MCF 10A (cell line): ENCODE measurements at regions of chr9 and their contacts with region 1.

Region 1: GRCh38 chr9:70602321-70603019 is 188.0 kb upstream of the KLF9 start:
- DNase-seq: peak; percentile 83
- H3K4me3 Mint-ChIP-seq: no peak overlapping the region
- H3K27ac Mint-ChIP-seq: no peak overlapping the region
- H3K4me1 Mint-ChIP-seq: peaks cover 12% of the 10 kb centered on the region
- H3K27me3 Mint-ChIP-seq: no peaks in the 10 kb centered on the region
- CTCF ChIP-seq: peak; percentile 77

Region 2: GRCh38 chr9:69421908-69422801 is 1180.3 kb before region 1 on chr9:
- CTCF ChIA-PET with region 1: interaction called, 3 read pairs
- POLR2A ChIA-PET with region 1: no interaction called
- intact Hi-C with region 1: loop called (anchors 10 kb)
- DNase-seq: peak; percentile 71
- H3K4me3 Mint-ChIP-seq: no peak overlapping the region
- H3K27ac Mint-ChIP-seq: no peak overlapping the region
- H3K4me1 Mint-ChIP-seq: no peaks in the 10 kb centered on the region
- H3K27me3 Mint-ChIP-seq: peaks cover 26% of the 10 kb centered on the region
- CTCF ChIP-seq: peak; percentile 78

Region 3: GRCh38 chr9:69971643-69972449 is 630.6 kb before region 1 on chr9:
- CTCF ChIA-PET with region 1: interaction called, 5 read pairs
- POLR2A ChIA-PET with region 1: interaction called, 5 read pairs
- intact Hi-C with region 1: loop called (anchors 1 kb)
- DNase-seq: peak; percentile 73
- H3K4me3 Mint-ChIP-seq: no peak overlapping the region
- H3K27ac Mint-ChIP-seq: peak overlapping the region; percentile 91
- H3K4me1 Mint-ChIP-seq: peaks cover 25% of the 10 kb centered on the region
- H3K27me3 Mint-ChIP-seq: no peaks in the 10 kb centered on the region
- CTCF ChIP-seq: peak; percentile 94

Region 4: GRCh38 chr9:70258692-70259511 is 343.6 kb before region 1 on chr9 and contains the start of gene SMC5:
- CTCF ChIA-PET with region 1: interaction called, 5 read pairs
- POLR2A ChIA-PET with region 1: interaction called, 9 read pairs
- intact Hi-C with region 1: loop called (anchors 10 kb)
- DNase-seq: peak; percentile 90
- H3K4me3 Mint-ChIP-seq: peak within 1 kb of the TSS; percentile 97
- H3K27ac Mint-ChIP-seq: peak within 1 kb of the TSS; percentile 99
- H3K4me1 Mint-ChIP-seq: peaks cover 63% of the 10 kb centered on the region
- H3K27me3 Mint-ChIP-seq: no peaks in the 10 kb centered on the region
- CTCF ChIP-seq: no peak
- total RNA-seq, gene SMC5: 29.8 and 31.9 TPM in 2 replicates

Region 5: GRCh38 chr9:70352802-70353201 is 249.7 kb before region 1 on chr9:
- CTCF ChIA-PET with region 1: interaction called, 31 read pairs
- POLR2A ChIA-PET with region 1: interaction called, 8 read pairs
- intact Hi-C with region 1: loop called (anchors 1 kb)
- DNase-seq: peak; percentile 14
- H3K4me3 Mint-ChIP-seq: no peak overlapping the region
- H3K27ac Mint-ChIP-seq: no peak overlapping the region
- H3K4me1 Mint-ChIP-seq: peaks cover 7% of the 10 kb centered on the region
- H3K27me3 Mint-ChIP-seq: no peaks in the 10 kb centered on the region
- CTCF ChIP-seq: peak; percentile 26

Region 6: DNA sequence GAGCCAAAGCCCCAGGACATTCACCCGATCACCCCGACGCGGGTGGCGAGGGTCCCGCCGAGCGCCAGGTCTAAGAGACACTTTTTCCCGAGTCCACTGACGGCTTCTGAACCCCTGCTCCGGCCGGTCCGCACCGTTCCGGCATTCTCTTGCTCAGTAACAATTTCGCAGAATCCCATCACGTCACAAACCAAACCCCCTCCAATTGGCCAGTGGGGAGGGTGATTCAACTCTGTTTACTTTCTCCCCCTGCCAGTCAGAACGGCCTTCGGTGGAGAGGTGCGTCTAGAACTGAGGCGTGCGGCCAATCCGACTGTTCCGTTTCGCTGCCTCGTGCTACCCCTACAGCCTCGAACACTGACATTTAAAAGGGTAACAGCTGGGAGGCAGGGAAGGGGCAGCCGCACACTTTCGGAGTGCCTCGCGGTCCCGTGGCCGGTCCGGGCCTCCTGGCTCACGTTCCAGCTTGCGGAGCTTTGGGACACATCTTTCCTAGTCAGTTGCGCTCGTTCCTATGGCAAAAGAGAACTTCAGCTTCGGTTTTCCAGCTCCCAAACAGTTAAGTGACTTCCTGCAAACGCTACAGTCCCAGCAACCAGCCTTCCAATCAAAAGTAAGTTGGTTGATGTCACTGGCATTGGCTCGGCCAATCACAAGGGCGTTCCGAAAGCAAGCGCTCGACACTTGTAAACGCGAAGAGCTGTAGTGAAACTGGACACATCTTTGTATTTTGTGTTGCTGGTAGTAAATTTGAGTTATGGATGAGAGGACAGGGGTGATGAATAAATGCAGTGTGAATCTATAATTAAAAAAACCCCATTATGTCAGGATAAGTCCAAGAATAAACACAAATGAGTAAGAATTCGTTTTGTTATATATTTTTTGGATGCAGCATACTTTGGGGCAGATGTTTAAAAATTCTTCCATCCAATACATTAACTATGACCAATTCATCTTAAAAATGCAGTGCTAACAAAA is 188.4 kb before region 1 on chr9 and contains the start of gene KLF9:
- CTCF ChIA-PET with region 1: interaction called, 56 read pairs
- POLR2A ChIA-PET with region 1: interaction called, 186 read pairs
- intact Hi-C with region 1: loop called (anchors 1 kb)
- DNase-seq: peak; percentile 99
- H3K4me3 Mint-ChIP-seq: peak within 1 kb of the TSS; percentile 98
- H3K27ac Mint-ChIP-seq: peak within 1 kb of the TSS; percentile 99
- H3K4me1 Mint-ChIP-seq: peaks cover 19% of the 10 kb centered on the region
- H3K27me3 Mint-ChIP-seq: no peaks in the 10 kb centered on the region
- CTCF ChIP-seq: no peak
- total RNA-seq, gene KLF9: 5.9 and 8.9 TPM in 2 replicates

Region 7: DNA sequence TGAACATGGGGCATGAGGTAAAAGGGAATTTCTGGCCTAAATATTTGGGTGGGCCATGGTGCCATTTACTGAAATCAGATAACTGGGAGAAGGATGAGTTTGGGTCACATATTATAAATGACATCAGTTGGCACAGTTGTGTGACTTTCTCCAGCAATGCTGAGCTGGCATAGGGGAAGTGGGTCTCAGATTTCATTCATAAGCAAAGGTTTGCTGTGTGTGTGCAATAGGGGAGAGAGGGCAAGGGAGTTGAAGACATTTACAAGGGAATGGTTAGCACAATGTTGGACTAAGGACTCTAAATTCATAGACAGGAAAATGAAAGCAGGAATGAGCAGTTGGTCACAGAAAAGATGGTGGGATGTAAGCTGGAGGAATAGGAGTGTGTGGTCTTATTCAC is 140.2 kb before region 1 on chr9:
- CTCF ChIA-PET with region 1: no interaction called
- POLR2A ChIA-PET with region 1: no interaction called
- intact Hi-C with region 1: no loop called
- DNase-seq: no peak
- H3K4me3 Mint-ChIP-seq: no peak overlapping the region
- H3K27ac Mint-ChIP-seq: no peak overlapping the region
- H3K4me1 Mint-ChIP-seq: peaks cover 10% of the 10 kb centered on the region
- H3K27me3 Mint-ChIP-seq: no peaks in the 10 kb centered on the region
- CTCF ChIP-seq: no peak

Region 8: GRCh38 chr9:70490478-70490877 is 112.0 kb before region 1 on chr9:
- CTCF ChIA-PET with region 1: interaction called, 12 read pairs
- POLR2A ChIA-PET with region 1: interaction called, 5 read pairs
- intact Hi-C with region 1: no loop called
- DNase-seq: peak; percentile 30
- H3K4me3 Mint-ChIP-seq: no peak overlapping the region
- H3K27ac Mint-ChIP-seq: no peak overlapping the region
- H3K4me1 Mint-ChIP-seq: peaks cover 26% of the 10 kb centered on the region
- H3K27me3 Mint-ChIP-seq: peaks cover 11% of the 10 kb centered on the region
- CTCF ChIP-seq: no peak

Region 9: GRCh38 chr9:71403106-71403505 is 800.6 kb after region 1 on chr9:
- CTCF ChIA-PET with region 1: no interaction called
- POLR2A ChIA-PET with region 1: no interaction called
- intact Hi-C with region 1: no loop called
- DNase-seq: no peak
- H3K4me3 Mint-ChIP-seq: no peak overlapping the region
- H3K27ac Mint-ChIP-seq: no peak overlapping the region
- H3K4me1 Mint-ChIP-seq: no peaks in the 10 kb centered on the region
- H3K27me3 Mint-ChIP-seq: no peaks in the 10 kb centered on the region
- CTCF ChIP-seq: no peak